Heart left ventricle (tissue), 16 donors: ENCODE measurements at regions of chr5 and their contacts with region 1.

Region 1: GRCh38 chr5:43484106-43484849 is 613 bp upstream of the TMEM267 start:
- DNase-seq: peak; percentile 82 to 88 (median 84)
- ATAC-seq: peak; percentile 72 to 87 (median 78)
- H3K4me3 ChIP-seq: peak overlapping the region; percentile 72 to 93 (median 88)
- H3K27ac ChIP-seq: peak overlapping the region; percentile 92 to 99 (median 96)
- H3K4me1 ChIP-seq: peaks cover 0 to 32% (median 15%) of the 10 kb centered on the region in 12 donors
- H3K27me3 ChIP-seq: no peaks in the 10 kb centered on the region
- CTCF ChIP-seq: peak; percentile 54 to 83 (median 71)
- POLR2A ChIP-seq: no peak

Region 2: GRCh38 chr5:43120720-43121564 is 363.3 kb before region 1 on chr5 and contains the start of gene ZNF131:
- intact Hi-C with region 1: loop called in 3 of 10 experiments (anchors 2 to 5 kb)
- DNase-seq: peak; percentile 96 to 98 (median 96)
- ATAC-seq: peak; percentile 98 to 99 (median 98)
- H3K4me3 ChIP-seq: peak within 1 kb of the TSS; percentile 25 to 97 (median 82)
- H3K27ac ChIP-seq: peak within 1 kb of the TSS; percentile 86 to 100 (median 98)
- H3K4me1 ChIP-seq: peaks cover 4 to 34% (median 22%) of the 10 kb centered on the region in 12 donors
- H3K27me3 ChIP-seq: no peaks in the 10 kb centered on the region
- CTCF ChIP-seq: no peak
- POLR2A ChIP-seq: peak in 1 of 2 donors; percentile 7
- total RNA-seq, gene ZNF131: 10.9 to 21.6 (median 13.3) TPM

Region 3: DNA sequence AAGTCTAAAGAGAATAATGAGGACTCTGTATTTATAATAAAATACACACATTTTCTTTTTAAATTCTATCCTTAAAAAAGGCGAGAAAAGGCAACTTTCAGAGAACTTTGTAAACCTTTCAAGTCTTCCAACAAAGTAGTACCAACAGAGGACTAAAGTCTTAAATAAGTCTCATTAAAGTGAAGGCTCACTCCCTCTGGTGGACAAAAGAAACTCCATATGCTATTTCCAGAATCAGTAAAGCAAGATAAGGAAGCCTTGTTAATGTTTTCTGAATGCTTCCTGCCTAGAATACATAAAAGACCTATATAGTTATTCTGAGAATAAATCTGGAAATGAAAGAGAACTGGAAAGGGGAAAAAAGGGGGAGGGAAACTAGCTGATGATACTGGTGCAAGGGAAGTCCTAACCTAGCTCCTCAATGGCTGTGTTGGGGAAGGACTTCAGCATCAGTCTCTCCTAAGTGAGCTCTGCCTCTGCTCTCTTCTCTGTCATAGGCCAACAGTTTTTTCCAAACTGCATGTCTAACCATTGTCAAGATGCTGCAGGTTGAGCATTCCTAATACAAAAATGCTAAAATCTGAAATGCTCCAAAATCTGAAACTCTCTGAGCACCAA is 178.2 kb before region 1 on chr5:
- intact Hi-C with region 1: loop called in 8 of 10 experiments (anchors 5 to 10 kb)
- DNase-seq: no peak
- ATAC-seq: peak in 2 of 4 donors; percentile 42 to 73
- H3K4me3 ChIP-seq: no peak overlapping the region
- H3K27ac ChIP-seq: no peak overlapping the region
- H3K4me1 ChIP-seq: peaks cover 0 to 55% (median 19%) of the 10 kb centered on the region in 12 donors
- H3K27me3 ChIP-seq: no peaks in the 10 kb centered on the region
- CTCF ChIP-seq: peak; percentile 45 to 77 (median 61)
- POLR2A ChIP-seq: no peak

Region 4: GRCh38 chr5:43313035-43313853 is 171.0 kb before region 1 on chr5 and contains the start of gene HMGCS1:
- intact Hi-C with region 1: loop called in 9 of 10 experiments (anchors 2 to 10 kb)
- DNase-seq: peak; percentile 98 to 99 (median 99)
- ATAC-seq: peak; percentile 98 to 99 (median 98)
- H3K4me3 ChIP-seq: peak within 1 kb of the TSS; percentile 67 to 97 (median 84)
- H3K27ac ChIP-seq: peak within 1 kb of the TSS; percentile 65 to 95 (median 87)
- H3K4me1 ChIP-seq: peaks cover 0 to 41% (median 25%) of the 10 kb centered on the region in 12 donors
- H3K27me3 ChIP-seq: no peaks in the 10 kb centered on the region
- CTCF ChIP-seq: peak in 2 of 12 donors; percentile 11 to 23
- POLR2A ChIP-seq: peak; percentile 93 to 96
- total RNA-seq, gene HMGCS1: 7.9 to 34.8 (median 30.0) TPM

Region 5: DNA sequence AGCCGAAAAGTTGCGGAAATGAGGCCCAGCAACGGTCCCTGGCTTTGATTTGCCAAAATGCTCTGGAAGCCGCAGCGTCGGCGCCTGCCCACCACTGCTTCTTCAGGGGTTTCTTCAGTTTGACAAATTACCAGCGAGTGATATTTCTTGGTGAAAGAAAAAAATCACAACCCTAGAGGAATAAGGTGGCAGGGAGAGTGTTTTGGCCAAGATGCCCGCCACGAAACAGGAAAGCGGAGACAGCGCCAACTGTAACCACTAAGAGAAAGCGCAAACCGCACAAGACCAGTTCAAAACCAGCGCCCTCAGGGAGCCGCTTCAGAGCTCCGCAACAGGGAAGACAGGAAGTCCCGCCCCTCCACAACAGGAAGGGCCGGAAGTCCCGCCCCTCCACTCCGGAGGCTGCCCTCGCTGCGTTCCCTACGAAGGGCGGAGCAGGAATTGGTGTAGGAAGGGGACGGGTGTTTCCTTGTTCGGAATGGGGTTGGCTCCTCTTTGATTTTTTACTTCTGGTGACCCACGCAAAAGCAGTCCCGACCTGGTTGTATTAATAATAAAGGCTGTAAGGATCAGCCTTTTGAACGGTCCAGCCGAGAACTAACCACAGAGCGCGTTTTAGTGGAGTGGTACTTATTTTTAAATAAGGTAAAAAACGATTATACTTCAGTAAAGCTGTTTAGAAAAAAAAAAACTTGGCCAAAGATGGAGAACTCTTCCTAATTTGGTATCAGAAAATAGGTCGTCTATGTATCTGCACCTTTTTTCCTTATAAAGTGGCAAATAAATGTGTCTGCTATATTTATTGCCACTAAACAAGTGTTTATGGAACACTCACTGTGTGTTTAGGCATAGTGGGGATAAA is 30.8 kb after region 1 on chr5 and contains the start of gene C5orf34:
- intact Hi-C with region 1: loop called in 2 of 10 experiments (anchors 1 to 2 kb)
- DNase-seq: peak; percentile 96 to 98 (median 97)
- ATAC-seq: peak; percentile 100
- H3K4me3 ChIP-seq: peak within 1 kb of the TSS; percentile 44 to 83 (median 64)
- H3K27ac ChIP-seq: peak within 1 kb of the TSS; percentile 18 to 97 (median 87)
- H3K4me1 ChIP-seq: peaks cover 0 to 21% (median 9%) of the 10 kb centered on the region in 12 donors
- H3K27me3 ChIP-seq: no peaks in the 10 kb centered on the region
- CTCF ChIP-seq: peak in 4 of 12 donors; percentile 3 to 19 (median 12)
- POLR2A ChIP-seq: peak in 1 of 2 donors; percentile 59
- total RNA-seq, gene C5orf34: 0.19 to 1.6 (median 0.60) TPM

Region 6: DNA sequence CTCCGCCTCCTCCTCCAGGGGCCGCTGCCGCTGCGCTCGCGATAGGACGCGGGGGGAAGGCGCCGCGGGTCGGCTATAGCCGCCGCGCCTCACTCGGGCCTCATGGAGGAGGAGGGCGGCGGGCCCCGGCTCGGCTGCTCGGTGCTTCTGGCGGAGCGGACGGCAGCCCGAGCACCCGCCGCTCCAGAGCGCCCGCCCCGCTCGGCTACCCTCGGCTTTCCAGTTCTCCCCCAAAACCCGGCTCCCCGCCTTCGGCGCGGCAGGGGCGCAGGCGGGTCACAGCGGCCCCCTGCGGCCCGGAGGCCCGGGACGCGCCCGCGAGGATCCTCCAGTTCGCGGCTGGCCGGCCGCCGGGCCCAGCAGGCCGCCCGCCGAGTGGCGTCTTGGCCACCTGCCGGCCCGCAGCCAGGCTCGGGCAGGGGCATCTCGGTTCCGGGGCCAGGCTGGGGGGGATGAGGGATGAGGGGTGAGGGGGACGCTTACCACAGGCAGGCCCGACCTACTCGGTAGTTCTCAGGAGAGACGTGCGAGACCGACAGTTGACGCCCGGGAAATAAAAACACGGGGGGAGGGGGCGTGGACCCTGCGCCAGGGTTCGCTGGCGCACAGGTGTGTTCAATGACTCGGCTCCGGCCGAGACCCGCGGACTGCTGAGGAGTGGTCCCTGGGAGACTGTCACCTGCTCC is 72.7 kb after region 1 on chr5 and contains the start of gene PAIP1:
- intact Hi-C with region 1: loop called in 2 of 10 experiments (anchors 5 kb)
- DNase-seq: peak; percentile 76 to 92 (median 84)
- ATAC-seq: peak; percentile 8 to 93 (median 86)
- H3K4me3 ChIP-seq: peak within 1 kb of the TSS; percentile 66 to 95 (median 85)
- H3K27ac ChIP-seq: peak within 1 kb of the TSS; percentile 89 to 99 (median 98)
- H3K4me1 ChIP-seq: peaks cover 3 to 47% (median 33%) of the 10 kb centered on the region in 12 donors
- H3K27me3 ChIP-seq: peaks cover 0 to 4% (median 0%) of the 10 kb centered on the region in 9 donors
- CTCF ChIP-seq: peak; percentile 50 to 92 (median 76)
- POLR2A ChIP-seq: peak in 1 of 2 donors; percentile 44
- total RNA-seq, gene PAIP1: 99.8 to 173 (median 140) TPM

Region 7: DNA sequence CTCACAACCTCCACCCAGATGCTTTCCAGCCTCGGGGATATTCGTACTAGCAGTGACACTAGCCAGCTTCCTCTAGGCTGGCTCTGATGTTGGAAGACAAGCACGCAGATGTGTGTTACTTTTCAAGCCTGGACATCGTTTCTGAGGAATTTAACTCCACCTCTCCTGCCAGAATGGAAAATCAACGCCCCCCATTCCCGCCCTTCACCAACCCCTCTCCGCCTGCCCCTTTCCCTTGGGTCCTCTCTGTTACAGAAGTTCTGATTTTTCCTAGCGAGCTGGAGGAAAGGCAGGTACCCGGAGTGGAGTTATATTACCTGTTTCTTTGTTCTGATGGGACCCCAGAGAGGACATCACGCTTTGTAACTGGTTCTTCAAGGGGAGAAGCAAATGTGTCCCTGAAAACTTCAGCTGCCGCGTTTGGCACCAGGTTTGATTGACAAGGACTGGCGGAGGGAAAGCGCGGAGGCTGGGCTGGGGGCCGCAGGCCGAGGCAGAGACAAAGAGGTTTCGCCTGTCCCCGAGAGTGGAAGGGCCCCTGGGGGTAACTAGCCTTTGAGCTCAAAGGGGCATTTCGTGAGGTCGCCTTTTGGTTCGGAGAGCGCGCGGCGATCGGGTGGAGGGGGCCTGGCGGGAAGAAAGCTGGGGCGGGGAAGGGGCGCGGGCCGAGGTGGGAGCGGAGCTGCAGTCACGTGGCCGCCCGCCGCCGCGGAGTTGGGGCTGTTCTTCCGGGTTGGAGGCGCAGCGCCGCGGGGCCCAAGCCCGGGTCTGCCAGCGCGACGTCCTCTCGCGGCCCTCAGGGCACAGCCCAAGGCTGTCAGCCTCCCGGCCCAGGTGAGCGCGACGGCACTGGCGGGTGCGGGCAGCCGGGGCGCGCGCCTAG is 118.4 kb after region 1 on chr5 and contains the start of gene NNT:
- intact Hi-C with region 1: loop called in 1 of 10 experiments (anchors 2 kb)
- DNase-seq: peak; percentile 83 to 91 (median 88)
- ATAC-seq: peak; percentile 32 to 84 (median 76)
- H3K4me3 ChIP-seq: peak within 1 kb of the TSS; percentile 62 to 90 (median 84)
- H3K27ac ChIP-seq: peak within 1 kb of the TSS; percentile 94 to 98 (median 96)
- H3K4me1 ChIP-seq: peaks cover 0 to 45% (median 18%) of the 10 kb centered on the region in 12 donors
- H3K27me3 ChIP-seq: no peaks in the 10 kb centered on the region
- CTCF ChIP-seq: peak in 1 of 12 donors; percentile 16
- POLR2A ChIP-seq: peak in 1 of 2 donors; percentile 48
- total RNA-seq, gene NNT: 206 to 631 (median 475) TPM